ENCODE measurements at regions of chr6 and their contacts with region 1.

Region 1: GRCh38 chr6:149074832-149075258 is 242.7 kb upstream of the TAB2 start:
- DNase-seq: no peak
- ATAC-seq: no peak
- H3K4me3 ChIP-seq: no peak overlapping the region
- H3K27ac ChIP-seq: no peak overlapping the region
- H3K4me1 ChIP-seq: no peaks in the 10 kb centered on the region
- H3K27me3 ChIP-seq: no peaks in the 10 kb centered on the region
- CTCF ChIP-seq: no peak
- POLR2A ChIP-seq: no peak

Region 2: GRCh38 chr6:149056777-149057463 is 17.9 kb before region 1 on chr6:
- in situ Hi-C with region 1: no loop called
- intact Hi-C with region 1: loop called (anchors 1 kb)
- DNase-seq: no peak
- ATAC-seq: no peak
- H3K4me3 ChIP-seq: no peak overlapping the region
- H3K27ac ChIP-seq: no peak overlapping the region
- H3K4me1 ChIP-seq: no peaks in the 10 kb centered on the region
- H3K27me3 ChIP-seq: no peaks in the 10 kb centered on the region
- CTCF ChIP-seq: no peak
- POLR2A ChIP-seq: no peak